Activated naive CD4-positive, alpha-beta T cell treated with anti-CD3 and anti-CD28 coated beads, Interleukin-2, amount 10 ng/mL, durations not matched to agents 7 days and 5 days (primary cell): ENCODE measurements at regions of chr2 and their contacts with region 1.

Region 1: GRCh38 chr2:176830362-176830761 is 382.2 kb upstream of the HNRNPA3 start:
- DNase-seq: peak; percentile 30
- H3K4me3 Mint-ChIP-seq: no peak overlapping the region
- H3K27ac Mint-ChIP-seq: no peak overlapping the region
- H3K4me1 Mint-ChIP-seq: peaks cover 23% of the 10 kb centered on the region
- H3K27me3 Mint-ChIP-seq: peaks cover 13% of the 10 kb centered on the region

Region 2: GRCh38 chr2:176814306-176815052 is 15.9 kb before region 1 on chr2:
- CTCF ChIA-PET with region 1: interaction called, 11 read pairs
- DNase-seq: no peak
- H3K4me3 Mint-ChIP-seq: no peak overlapping the region
- H3K27ac Mint-ChIP-seq: no peak overlapping the region
- H3K4me1 Mint-ChIP-seq: peaks cover 7% of the 10 kb centered on the region
- H3K27me3 Mint-ChIP-seq: peaks cover 2% of the 10 kb centered on the region

Region 3: DNA sequence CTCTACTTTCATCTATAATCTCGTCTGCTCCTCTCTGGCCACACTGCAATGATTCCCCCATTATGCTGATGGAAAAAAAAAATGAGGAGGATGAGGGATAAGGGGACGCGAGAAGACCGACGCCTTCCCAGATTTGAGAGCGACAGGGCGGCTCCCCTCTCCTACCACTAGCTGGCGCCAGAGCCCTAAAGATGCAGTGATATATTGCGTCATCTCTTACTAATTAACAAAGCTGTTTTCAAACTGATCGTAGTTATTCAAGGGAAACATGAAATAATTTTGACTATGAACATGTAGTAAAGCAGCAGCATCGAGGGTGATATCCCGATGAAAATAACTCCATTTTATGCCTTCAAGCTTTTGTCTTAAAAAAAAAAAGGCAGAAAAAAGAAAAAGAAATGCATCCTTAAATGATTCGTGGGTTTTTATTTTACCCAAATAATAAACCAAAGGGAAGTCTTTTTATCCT is 334.3 kb after region 1 on chr2:
- CTCF ChIA-PET with region 1: no interaction called
- DNase-seq: peak; percentile 85
- H3K4me3 Mint-ChIP-seq: no peak overlapping the region
- H3K27ac Mint-ChIP-seq: no peak overlapping the region
- H3K4me1 Mint-ChIP-seq: peaks cover 35% of the 10 kb centered on the region
- H3K27me3 Mint-ChIP-seq: peaks cover 13% of the 10 kb centered on the region